ENCODE measurements at regions of chr3 and their contacts with region 1.

Region 1: DNA sequence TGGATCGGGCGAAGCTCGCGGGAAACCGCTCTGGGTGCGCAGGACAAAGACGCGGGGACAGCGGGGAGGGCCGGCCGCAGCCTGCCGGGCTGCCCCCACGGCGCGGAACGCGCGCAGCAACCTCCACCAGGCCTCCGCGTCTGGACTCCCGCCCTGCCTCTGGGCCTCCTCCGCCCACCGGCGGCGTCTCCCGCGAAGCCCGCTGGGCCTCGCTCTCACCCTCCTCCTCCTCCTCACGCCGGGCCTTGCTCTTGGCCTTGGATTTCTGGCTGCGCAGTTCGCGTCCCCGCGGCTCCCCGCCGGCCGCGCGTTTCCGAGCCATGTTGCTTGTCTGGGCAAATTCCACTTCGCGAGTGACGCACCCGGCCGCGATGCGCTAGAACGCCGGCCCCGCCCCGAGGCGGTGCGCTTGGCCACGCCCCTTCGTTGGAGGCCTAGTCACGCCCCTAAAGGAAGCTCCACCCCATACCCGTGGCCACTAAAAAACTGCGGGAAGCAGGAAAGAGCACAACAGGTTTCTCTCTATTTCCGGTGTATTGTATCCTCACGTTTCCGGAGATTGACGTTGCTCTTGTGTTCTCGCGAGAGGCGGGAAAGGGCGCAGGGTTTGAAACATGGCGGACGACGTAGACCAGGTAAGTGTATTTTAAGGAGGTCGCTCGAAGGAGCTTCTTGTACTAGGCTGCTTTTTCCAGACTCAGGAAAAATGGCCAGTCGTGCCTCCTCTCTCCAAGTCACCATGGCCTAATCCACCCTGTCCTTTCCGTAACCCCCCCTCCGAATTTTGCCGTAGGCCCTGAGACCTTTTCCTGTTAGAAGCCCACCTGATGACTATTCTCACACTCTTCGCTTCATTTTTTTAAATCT is at the starts of genes LSM3 and XPC:
- DNase-seq: peak; percentile 99
- H3K4me3 ChIP-seq: peak within 1 kb of the TSS; percentile 62 to 89 (median 76)
- H3K27ac ChIP-seq: peak within 1 kb of the TSS; percentile 89 to 99 (median 96)
- H3K4me1 ChIP-seq: peaks cover 0 to 32% (median 29%) of the 10 kb centered on the region in 4 donors
- H3K27me3 ChIP-seq: no peaks in the 10 kb centered on the region
- CTCF ChIP-seq: no peak
- EP300 ChIP-seq: peak in 1 of 4 donors; percentile 86
- POLR2A ChIP-seq: peak; percentile 85 to 91
- total RNA-seq, gene LSM3: 8.0 to 17.1 (median 14.9) TPM
- total RNA-seq, gene XPC: 30.3 to 37.5 (median 32.6) TPM

Region 2: GRCh38 chr3:13801361-13802214 is 376.9 kb before region 1 on chr3:
- intact Hi-C with region 1: no loop called
- DNase-seq: no peak
- H3K4me3 ChIP-seq: no peak overlapping the region
- H3K27ac ChIP-seq: no peak overlapping the region
- H3K4me1 ChIP-seq: no peaks in the 10 kb centered on the region
- H3K27me3 ChIP-seq: no peaks in the 10 kb centered on the region
- CTCF ChIP-seq: no peak
- EP300 ChIP-seq: no peak
- POLR2A ChIP-seq: no peak

Region 3: DNA sequence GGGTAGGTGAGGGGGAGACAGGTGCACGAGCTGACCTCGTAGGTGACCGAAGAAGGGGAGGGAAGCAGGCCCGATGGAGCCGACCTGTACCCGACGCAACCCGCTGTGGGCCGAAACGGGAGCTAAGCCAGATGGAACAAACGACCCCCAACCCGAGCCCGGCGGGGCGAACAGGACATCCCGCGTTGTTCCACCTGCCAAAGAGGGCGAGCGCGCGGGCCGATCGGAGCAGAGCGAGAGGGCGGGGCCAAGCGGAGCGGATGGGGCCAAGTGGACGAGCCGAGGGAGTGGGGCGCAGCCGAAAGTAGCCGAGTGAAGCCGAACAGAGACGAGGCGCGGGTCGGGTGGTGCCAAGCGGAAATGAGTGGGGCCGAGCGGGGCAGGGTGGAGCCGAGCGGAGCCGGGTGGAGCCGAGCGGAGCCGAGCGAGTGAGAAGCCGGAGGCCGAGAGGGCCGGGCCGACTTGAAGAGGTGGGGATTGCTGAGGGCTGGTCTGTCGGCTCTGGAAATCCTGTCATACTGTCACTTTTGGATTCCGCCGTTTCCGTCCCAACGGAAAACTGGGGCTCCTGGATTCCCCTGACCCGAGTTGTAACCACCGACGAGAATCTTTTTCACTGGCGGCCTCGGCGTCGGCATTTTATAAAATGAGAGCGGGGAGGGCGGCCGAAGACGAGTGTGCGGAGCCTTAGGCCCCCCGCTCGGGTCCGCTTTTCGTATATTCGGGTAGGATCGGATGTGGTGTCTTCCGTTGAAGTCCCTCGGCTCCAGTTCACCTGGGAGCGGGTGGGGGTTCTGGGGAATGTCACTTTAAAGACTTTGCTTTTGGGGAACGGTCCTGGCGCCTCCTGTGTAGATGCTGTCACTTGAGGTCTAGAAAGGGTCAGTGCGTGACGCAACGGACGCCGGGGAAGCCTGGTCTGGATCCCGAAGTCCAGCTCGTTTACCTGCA is 283.1 kb before region 1 on chr3:
- intact Hi-C with region 1: loop called (anchors 2 kb)
- DNase-seq: peak; percentile 97
- H3K4me3 ChIP-seq: peak overlapping the region; percentile 48 to 72 (median 68)
- H3K27ac ChIP-seq: peak overlapping the region; percentile 74 to 79 (median 77)
- H3K4me1 ChIP-seq: peaks cover 0 to 20% (median 15%) of the 10 kb centered on the region in 4 donors
- H3K27me3 ChIP-seq: no peaks in the 10 kb centered on the region
- CTCF ChIP-seq: no peak
- EP300 ChIP-seq: no peak
- POLR2A ChIP-seq: peak in 1 of 2 donors; percentile 85

Region 4: DNA sequence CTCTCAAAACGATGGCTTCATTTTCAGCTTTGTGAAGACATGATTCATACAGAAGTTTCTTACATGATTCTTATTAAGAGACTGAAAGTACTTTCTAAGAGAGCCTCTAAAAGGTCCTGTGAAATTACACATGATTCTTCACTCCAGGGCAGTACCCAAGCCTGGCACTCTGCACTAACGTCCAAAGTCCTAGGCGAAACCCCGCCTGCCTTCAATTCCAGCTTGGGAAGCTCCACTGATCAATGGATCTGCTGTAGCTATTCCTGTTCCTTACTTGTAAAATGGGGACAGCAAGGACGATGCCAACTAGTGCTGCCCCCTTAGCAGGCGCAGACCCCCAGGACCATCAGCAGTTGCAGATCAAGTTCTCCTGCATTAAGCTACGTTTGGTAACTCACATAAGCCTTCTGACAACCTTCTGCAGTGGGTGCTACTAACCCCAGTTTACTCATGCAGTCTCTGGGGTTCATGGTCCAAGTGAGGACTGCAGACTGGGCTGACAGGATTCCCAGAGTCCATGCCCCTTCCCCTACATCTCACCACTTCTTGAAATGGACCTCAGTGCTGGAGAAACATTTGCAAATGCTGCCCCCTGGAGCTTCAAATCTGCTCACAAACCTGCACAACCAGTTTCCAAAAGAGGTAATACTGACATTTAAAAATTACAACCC is 64.4 kb before region 1 on chr3:
- intact Hi-C with region 1: no loop called
- DNase-seq: no peak
- H3K4me3 ChIP-seq: no peak overlapping the region
- H3K27ac ChIP-seq: no peak overlapping the region
- H3K4me1 ChIP-seq: peaks cover 0 to 8% (median 3%) of the 10 kb centered on the region in 4 donors
- H3K27me3 ChIP-seq: no peaks in the 10 kb centered on the region
- CTCF ChIP-seq: no peak
- EP300 ChIP-seq: no peak
- POLR2A ChIP-seq: no peak

Region 5: DNA sequence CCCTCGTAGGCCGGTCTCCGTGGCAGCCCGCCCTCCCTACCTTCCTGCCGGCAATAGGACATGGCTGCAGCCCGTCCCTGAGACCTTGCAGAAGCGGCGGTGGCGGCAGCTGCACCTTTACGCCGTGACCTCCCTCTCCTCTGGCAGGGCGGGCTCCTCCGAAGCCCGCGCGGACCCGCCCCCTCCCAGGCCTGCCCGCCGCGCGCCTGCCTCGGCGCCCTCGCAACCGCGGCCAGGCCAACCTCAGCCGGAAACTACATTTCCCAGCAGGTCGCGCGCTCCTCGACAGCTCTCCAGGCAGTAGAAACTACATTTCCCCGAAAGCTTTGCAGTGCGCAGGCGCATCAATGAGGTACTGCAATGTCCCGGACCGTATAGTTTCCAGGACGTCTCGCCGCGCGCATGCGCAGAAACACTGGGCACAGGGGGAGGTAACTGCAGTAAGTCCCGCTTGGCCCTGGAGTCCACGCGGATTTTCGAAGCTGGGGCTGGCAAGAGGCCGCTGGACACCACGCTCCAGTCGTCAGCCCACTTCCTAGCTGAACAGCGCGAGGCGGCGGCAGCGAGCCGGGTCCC is 53.8 kb before region 1 on chr3 and contains the starts of genes CHCHD4 and TMEM43:
- intact Hi-C with region 1: loop called (anchors 1 kb)
- DNase-seq: peak; percentile 100
- H3K4me3 ChIP-seq: peak within 1 kb of the TSS; percentile 68 to 96 (median 87)
- H3K27ac ChIP-seq: peak within 1 kb of the TSS; percentile 86 to 97 (median 94)
- H3K4me1 ChIP-seq: peaks cover 0 to 49% (median 38%) of the 10 kb centered on the region in 4 donors
- H3K27me3 ChIP-seq: no peaks in the 10 kb centered on the region
- CTCF ChIP-seq: no peak
- EP300 ChIP-seq: peak in 1 of 4 donors; percentile 53
- POLR2A ChIP-seq: peak; percentile 62 to 71
- total RNA-seq, gene CHCHD4: 13.0 to 33.1 (median 26.3) TPM
- total RNA-seq, gene TMEM43: 68.0 to 88.3 (median 80.2) TPM

Region 6: DNA sequence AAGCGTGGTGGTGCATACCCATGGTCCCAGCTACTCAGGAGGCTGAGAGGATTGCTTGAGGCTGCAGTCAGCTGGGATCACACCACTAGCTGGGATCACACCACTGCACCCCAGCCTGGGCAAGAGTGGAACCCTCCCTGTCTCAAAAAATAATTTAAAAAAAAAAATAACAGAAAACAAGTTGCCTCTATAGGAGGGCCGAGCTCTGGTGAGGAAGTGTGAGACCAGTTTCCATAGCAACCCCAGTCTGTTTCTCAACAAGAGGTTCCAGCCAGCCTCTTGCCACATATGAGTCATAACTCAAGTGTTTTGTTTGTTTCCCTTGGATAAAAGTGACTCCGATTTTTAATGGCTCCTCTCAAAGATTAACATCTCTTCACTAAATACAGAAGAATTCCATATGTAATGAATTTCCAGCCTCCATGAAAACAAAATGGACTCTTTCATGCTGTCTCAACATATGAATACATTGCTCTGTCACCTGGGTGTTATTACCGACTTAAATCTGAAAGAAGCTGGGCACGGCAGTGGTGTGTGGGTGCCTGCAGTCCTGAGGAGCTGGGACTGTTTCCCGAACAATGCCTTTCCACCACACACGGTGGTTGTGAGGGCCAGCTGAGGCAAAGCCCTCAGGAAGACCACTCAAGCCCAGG is 33.9 kb before region 1 on chr3:
- intact Hi-C with region 1: loop called (anchors 2 kb)
- DNase-seq: peak; percentile 92
- H3K4me3 ChIP-seq: peak overlapping the region in 3 of 4 donors; percentile 7 to 24 (median 20)
- H3K27ac ChIP-seq: peak overlapping the region; percentile 81 to 92 (median 84)
- H3K4me1 ChIP-seq: peaks cover 0 to 54% (median 46%) of the 10 kb centered on the region in 4 donors
- H3K27me3 ChIP-seq: no peaks in the 10 kb centered on the region
- CTCF ChIP-seq: no peak
- EP300 ChIP-seq: peak in 3 of 4 donors; percentile 39 to 83 (median 47)
- POLR2A ChIP-seq: no peak

Measured in sigmoid colon (tissue), 7 donors.